T-cell (primary cell): ENCODE measurements at regions of chr19 and their contacts with region 1.

Region 1: GRCh38 chr19:35931161-35931873 is 4.9 kb upstream of the LRFN3 start:
- DNase-seq: peak; percentile 98 to 100 (median 99)
- ATAC-seq: peak; percentile 96 to 98 (median 96)
- H3K4me3 ChIP-seq: peak overlapping the region; percentile 32 to 64
- H3K4me3 Mint-ChIP-seq: peak overlapping the region; percentile 70 to 79 (median 76)
- H3K27ac ChIP-seq: peak overlapping the region; percentile 79
- H3K27ac Mint-ChIP-seq: peak overlapping the region; percentile 94 to 97
- H3K4me1 ChIP-seq: peaks cover 30 to 61% of the 10 kb centered on the region in 2 experiments
- H3K4me1 Mint-ChIP-seq: peaks cover 39 to 51% (median 41%) of the 10 kb centered on the region in 3 donors
- H3K27me3 ChIP-seq: peaks cover 0 to 3% of the 10 kb centered on the region in 2 experiments
- H3K27me3 Mint-ChIP-seq: no peaks in the 10 kb centered on the region

Region 2: DNA sequence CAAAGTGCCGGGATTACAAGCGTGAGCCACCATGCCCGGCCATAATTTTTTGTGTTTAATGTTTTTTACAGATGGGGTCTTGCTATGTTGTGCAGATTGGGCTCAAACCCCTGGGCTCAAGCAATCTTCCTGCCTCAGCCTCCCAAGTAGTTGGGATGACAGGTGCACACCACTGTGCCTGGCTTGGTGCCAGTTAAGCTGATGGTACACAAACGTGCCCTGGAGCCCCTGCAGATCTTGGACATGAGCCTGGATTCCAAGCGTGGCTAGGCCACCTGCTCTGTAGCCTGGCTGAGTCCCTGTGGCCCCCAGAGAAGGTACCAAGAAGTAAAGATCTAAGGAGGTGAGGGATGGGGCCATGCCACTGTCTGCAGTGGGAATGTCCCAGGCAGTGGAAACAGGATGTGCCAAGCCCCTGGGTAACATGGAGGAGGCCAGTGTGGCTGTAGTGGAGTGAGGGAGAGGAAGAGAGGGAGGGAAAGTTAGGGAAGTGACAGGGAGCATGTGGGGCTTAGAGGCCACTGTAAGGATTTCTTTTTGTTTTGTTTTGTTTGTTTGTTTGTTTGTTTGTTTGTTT is 125.7 kb before region 1 on chr19:
- CTCF ChIA-PET with region 1: no interaction called
- POLR2A ChIA-PET with region 1: no interaction called
- DNase-seq: no peak
- ATAC-seq: no peak
- H3K4me3 ChIP-seq: no peak overlapping the region
- H3K4me3 Mint-ChIP-seq: no peak overlapping the region
- H3K27ac ChIP-seq: no peak overlapping the region
- H3K27ac Mint-ChIP-seq: no peak overlapping the region
- H3K4me1 ChIP-seq: peaks cover 0 to 10% of the 10 kb centered on the region in 2 experiments
- H3K4me1 Mint-ChIP-seq: peaks cover 6 to 9% (median 8%) of the 10 kb centered on the region in 3 donors
- H3K27me3 ChIP-seq: peaks cover 0 to 2% of the 10 kb centered on the region in 2 experiments
- H3K27me3 Mint-ChIP-seq: peaks cover 3 to 4% of the 10 kb centered on the region in 2 donors

Region 3: GRCh38 chr19:35882114-35882832 is 49.0 kb before region 1 on chr19:
- CTCF ChIA-PET with region 1: interaction called, 7 to 24 read pairs
- POLR2A ChIA-PET with region 1: no interaction called
- DNase-seq: peak in 16 of 35 experiments; percentile 18 to 84 (median 36)
- ATAC-seq: peak; percentile 54 to 65 (median 60)
- H3K4me3 ChIP-seq: no peak overlapping the region
- H3K4me3 Mint-ChIP-seq: no peak overlapping the region
- H3K27ac ChIP-seq: no peak overlapping the region
- H3K27ac Mint-ChIP-seq: peak overlapping the region in 1 of 2 donors; percentile 31
- H3K4me1 ChIP-seq: peaks cover 3 to 9% of the 10 kb centered on the region in 2 experiments
- H3K4me1 Mint-ChIP-seq: peaks cover 9 to 20% (median 11%) of the 10 kb centered on the region in 3 donors
- H3K27me3 ChIP-seq: peaks cover 3 to 34% of the 10 kb centered on the region in 2 experiments
- H3K27me3 Mint-ChIP-seq: peaks cover 14 to 19% of the 10 kb centered on the region in 2 donors

Region 4: DNA sequence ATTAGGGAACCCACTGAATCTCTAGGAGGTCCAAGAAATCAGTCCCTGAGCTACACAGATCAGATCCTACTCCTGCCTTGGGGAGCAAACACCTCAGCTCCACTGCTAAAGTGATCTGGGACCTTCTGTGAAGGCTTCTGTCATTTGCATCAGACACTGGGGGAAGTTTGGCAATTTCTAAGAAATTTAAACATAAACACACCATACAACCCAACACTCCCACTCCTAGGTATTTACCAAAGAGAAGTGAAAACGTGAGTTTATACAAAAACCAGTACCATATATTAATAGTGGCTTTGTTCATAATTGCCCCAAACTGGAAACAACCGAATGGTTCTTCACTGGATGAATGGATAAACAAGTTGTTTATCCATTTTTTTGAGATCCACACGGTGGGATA is 15.9 kb before region 1 on chr19:
- CTCF ChIA-PET with region 1: no interaction called
- POLR2A ChIA-PET with region 1: interaction called in 1 of 2 experiments, 21 read pairs
- DNase-seq: no peak
- ATAC-seq: no peak
- H3K4me3 ChIP-seq: no peak overlapping the region
- H3K4me3 Mint-ChIP-seq: no peak overlapping the region
- H3K27ac ChIP-seq: no peak overlapping the region
- H3K27ac Mint-ChIP-seq: no peak overlapping the region
- H3K4me1 ChIP-seq: peaks cover 0 to 9% of the 10 kb centered on the region in 2 experiments
- H3K4me1 Mint-ChIP-seq: peaks cover 5 to 12% (median 11%) of the 10 kb centered on the region in 3 donors
- H3K27me3 ChIP-seq: no peaks in the 10 kb centered on the region
- H3K27me3 Mint-ChIP-seq: no peaks in the 10 kb centered on the region

Region 5: DNA sequence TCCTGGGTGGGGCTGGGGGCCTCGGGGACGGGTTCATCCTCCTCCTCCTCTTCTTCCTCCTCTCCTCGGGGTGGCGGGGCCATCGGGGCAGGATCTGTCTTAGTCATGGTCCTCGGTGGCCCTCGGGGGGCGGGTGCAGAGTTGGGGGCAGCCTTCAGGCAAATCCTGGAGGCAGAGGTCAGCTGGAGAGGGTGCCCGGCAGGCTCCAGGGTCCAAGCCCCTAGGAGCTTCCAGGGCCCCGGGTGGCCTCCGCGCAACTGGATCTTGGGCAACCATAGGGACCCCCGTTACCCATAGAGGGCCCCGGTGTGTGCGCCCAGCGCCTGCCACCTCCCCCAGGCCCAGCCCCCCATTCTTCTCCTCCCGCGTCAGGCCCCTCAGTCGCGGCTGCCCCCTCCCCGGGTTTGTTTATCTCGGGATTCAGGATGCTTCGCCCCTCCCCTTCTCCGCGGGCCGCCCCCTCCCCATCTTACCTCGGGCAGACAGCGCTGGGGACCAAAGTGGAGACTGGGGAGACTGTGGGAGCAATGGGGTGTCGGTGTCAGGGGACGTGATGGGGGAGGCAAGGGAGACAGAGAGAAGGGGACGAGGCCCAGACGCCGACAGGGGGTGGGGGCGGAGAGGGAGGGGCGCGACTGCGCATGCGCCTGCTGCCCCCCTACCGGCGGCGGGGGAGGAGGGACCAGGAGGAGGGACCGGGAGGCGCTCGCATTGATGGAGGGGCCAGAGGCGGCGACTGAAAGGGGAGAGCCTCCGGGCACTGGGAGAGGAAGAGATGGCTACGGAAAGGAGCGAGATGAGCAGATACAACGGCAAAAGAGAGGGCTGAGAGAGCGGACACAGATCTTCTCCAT is 101.2 kb after region 1 on chr19 and contains the start of gene CLIP3:
- CTCF ChIA-PET with region 1: no interaction called
- POLR2A ChIA-PET with region 1: no interaction called
- DNase-seq: peak in 19 of 35 experiments; percentile 10 to 52 (median 27)
- ATAC-seq: peak in 3 of 4 experiments; percentile 59 to 61 (median 60)
- H3K4me3 ChIP-seq: peak within 1 kb of the TSS; percentile 28 to 35
- H3K4me3 Mint-ChIP-seq: peak within 1 kb of the TSS; percentile 31 to 64 (median 57)
- H3K27ac ChIP-seq: no peak within 1 kb of the TSS
- H3K27ac Mint-ChIP-seq: peak within 1 kb of the TSS in 1 of 2 donors; percentile 16
- H3K4me1 ChIP-seq: peaks cover 24 to 35% of the 10 kb centered on the region in 2 experiments
- H3K4me1 Mint-ChIP-seq: peaks cover 36 to 47% (median 38%) of the 10 kb centered on the region in 3 donors
- H3K27me3 ChIP-seq: peaks cover 0 to 12% of the 10 kb centered on the region in 2 experiments
- H3K27me3 Mint-ChIP-seq: peaks cover 0 to 3% of the 10 kb centered on the region in 2 donors
- total RNA-seq, gene CLIP3: 1.4 to 6.2 (median 2.6) TPM